Activated T-helper 1 cell treated with anti-CD3 and anti-CD28 coated beads, Interleukin-12 subunit alpha, Interleukin-12 subunit beta, Interleukin-2, Interleukin-4 antibody, amounts not matched to agents 30 ng/mL and 10 ng/mL and 1 ng/mL, durations not matched to agents 14 hours and 24 hours and 36 hours (primary cell): ENCODE measurements at regions of chr19 and their contacts with region 1.

Region 1: GRCh38 chr19:34269968-34270621 is 15.7 kb downstream of the GARRE1 start:
- DNase-seq: peak; percentile 51
- H3K4me3 Mint-ChIP-seq: peak overlapping the region; percentile 60
- H3K27ac Mint-ChIP-seq: peak overlapping the region; percentile 76
- H3K4me1 Mint-ChIP-seq: peaks cover 22% of the 10 kb centered on the region
- H3K27me3 Mint-ChIP-seq: peaks cover 4% of the 10 kb centered on the region

Region 2: DNA sequence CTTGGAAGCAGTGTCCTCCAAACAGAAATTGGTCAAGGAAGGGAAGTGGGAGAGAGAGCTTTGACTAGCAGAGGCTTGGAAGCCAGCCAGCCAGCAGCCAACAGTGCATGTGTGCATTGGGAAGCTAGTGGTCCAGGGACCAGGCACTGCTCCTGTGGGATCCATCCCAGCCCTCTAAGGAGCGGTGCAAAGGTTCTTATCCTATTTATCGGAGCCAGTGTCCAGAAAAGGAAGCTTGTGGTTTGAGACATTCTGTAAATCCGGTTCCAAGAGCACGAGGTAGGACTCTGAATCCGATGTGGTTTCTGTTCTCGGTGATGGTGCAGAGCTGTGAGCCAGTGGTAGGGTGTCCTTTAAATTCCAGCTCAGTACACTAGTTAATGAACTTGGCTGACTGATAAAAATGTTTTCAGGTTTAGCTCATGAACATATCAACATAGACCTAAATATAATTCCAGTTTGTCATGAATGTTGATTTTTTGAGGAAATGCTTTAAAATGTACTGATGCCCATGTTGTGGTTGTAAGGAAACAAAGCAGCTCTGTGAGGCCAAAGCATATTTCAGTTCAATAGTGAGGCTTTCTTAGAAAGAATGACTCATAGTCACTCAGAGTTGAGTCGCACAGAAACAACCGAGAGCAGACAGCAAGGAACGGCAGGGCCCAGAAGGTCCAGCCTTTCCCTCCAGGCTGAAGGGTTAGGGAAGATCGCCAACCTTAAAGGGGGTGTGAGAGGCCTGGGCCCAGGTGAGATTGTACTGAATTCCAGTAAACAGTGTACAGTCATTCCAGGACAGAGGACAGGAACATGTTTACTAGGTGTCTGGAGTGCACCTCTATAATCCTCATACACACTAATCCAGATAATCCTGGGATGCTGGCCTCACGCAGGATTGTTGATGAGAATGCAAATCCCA is 37.3 kb before region 1 on chr19:
- intact Hi-C with region 1: loop called (anchors 1 kb)
- DNase-seq: peak; percentile 5
- H3K4me3 Mint-ChIP-seq: peak overlapping the region; percentile 62
- H3K27ac Mint-ChIP-seq: peak overlapping the region; percentile 76
- H3K4me1 Mint-ChIP-seq: peaks cover 31% of the 10 kb centered on the region
- H3K27me3 Mint-ChIP-seq: no peaks in the 10 kb centered on the region

Region 3: GRCh38 chr19:34336781-34337271 is 66.7 kb after region 1 on chr19:
- intact Hi-C with region 1: loop called (anchors 1 kb)
- DNase-seq: peak; percentile 14
- H3K4me3 Mint-ChIP-seq: no peak overlapping the region
- H3K27ac Mint-ChIP-seq: no peak overlapping the region
- H3K4me1 Mint-ChIP-seq: peaks cover 5% of the 10 kb centered on the region
- H3K27me3 Mint-ChIP-seq: no peaks in the 10 kb centered on the region